ENCODE measurements at regions of chr17 and their contacts with region 1.

Region 1: DNA sequence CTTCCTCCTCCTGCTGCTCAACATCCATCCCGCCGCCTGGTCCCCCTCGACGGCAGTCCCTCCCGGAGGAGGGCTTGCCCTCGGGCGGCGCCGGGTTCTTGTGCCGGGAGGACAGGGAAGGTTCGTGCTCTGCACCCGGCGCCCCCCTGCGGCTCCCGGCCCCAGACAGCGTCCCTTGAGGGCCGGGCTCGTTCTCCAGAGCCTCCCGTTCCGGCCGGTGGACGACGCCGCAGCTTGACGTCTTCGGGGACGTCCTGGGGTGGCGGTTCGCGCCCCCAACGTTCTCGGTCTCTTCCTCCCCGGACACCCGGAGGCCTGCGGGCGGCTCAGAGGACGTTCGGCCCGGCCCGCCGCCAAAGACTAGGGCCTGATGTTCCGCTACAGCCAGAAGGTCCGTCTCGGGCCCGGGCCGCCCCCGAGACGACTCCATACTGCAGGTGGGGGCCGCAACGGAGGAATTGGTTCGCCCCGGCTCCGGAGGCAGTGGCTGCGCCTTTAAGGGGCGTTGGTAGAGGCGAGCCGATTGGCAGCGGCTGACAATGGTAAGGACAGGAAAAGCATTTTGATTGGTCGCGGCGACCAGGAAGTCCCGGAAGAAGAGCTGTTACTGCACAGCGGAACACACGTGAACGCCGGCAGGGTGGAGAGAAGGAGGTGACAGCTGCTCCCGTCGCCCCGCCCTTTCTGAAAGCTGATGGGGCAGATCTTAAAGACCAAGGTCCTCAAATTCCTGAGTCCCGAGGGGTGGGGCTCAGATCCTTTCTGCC is at the start of gene BORCS6:
- DNase-seq: peak; percentile 97 to 99 (median 98)
- ATAC-seq: peak; percentile 68 to 83 (median 78)
- H3K4me3 ChIP-seq: peak within 1 kb of the TSS; percentile 57 to 96 (median 82)
- H3K27ac ChIP-seq: peak within 1 kb of the TSS; percentile 87 to 99 (median 96)
- H3K4me1 ChIP-seq: peaks cover 6 to 54% (median 35%) of the 10 kb centered on the region in 12 donors
- H3K27me3 ChIP-seq: no peaks in the 10 kb centered on the region
- CTCF ChIP-seq: peak in 5 of 12 donors; percentile 10 to 23 (median 12)
- POLR2A ChIP-seq: peak in 1 of 2 donors; percentile 88
- total RNA-seq, gene BORCS6: 6.1 to 13.5 (median 8.1) TPM

Region 2: GRCh38 chr17:8138672-8139371 is 51.1 kb before region 1 on chr17:
- intact Hi-C with region 1: loop called in 2 of 10 experiments (anchors 1 to 10 kb)
- DNase-seq: peak; percentile 94 to 97 (median 94)
- ATAC-seq: peak; percentile 90 to 93 (median 91)
- H3K4me3 ChIP-seq: peak overlapping the region in 8 of 12 donors; percentile 2 to 48 (median 33)
- H3K27ac ChIP-seq: peak overlapping the region; percentile 31 to 89 (median 81)
- H3K4me1 ChIP-seq: peaks cover 0 to 45% (median 15%) of the 10 kb centered on the region in 12 donors
- H3K27me3 ChIP-seq: no peaks in the 10 kb centered on the region
- CTCF ChIP-seq: peak; percentile 82 to 95 (median 90)
- POLR2A ChIP-seq: peak in 1 of 2 donors; percentile 75

Region 3: DNA sequence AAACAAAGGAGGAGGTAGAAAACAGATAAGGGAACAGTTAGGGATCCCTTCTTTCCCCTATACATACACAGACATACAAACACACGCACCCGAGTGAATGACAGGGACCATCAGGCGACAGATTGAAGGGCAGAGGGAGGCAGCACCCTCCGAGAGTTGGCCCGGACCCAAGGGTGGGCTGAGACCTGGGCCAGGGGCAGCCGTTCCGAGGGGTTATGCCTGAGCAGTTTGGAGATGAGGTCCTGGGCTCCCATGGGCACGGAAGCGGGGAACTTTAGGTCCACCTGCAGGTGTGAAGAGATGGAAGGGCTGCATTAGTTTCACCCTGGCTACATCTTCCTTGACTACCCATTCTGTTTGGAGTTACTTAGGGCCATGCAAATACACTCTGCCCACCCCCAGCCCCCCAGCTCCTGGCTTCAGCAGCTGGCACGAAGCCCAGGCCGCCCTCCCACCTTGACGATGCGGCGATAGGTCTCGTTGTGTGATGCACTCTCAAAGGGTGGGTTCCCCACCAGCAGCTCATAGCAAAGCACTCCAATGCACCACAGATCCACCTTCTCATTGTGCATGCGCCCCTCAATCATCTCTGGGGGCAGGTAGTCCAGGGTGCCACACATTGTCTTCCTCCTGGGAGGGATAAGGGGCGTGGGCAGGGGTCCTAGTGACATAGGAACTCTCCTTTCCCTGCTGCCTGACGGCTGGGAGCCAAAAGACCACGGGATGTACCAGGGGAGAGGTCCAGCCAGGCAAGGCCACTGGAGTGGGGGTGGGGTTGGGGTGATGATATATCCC is 15.1 kb after region 1 on chr17:
- intact Hi-C with region 1: loop called in 1 of 10 experiments (anchors 1 kb)
- DNase-seq: no peak
- ATAC-seq: no peak
- H3K4me3 ChIP-seq: no peak overlapping the region
- H3K27ac ChIP-seq: no peak overlapping the region
- H3K4me1 ChIP-seq: peaks cover 0 to 16% (median 2%) of the 10 kb centered on the region in 12 donors
- H3K27me3 ChIP-seq: no peaks in the 10 kb centered on the region
- CTCF ChIP-seq: no peak
- POLR2A ChIP-seq: no peak

Region 4: DNA sequence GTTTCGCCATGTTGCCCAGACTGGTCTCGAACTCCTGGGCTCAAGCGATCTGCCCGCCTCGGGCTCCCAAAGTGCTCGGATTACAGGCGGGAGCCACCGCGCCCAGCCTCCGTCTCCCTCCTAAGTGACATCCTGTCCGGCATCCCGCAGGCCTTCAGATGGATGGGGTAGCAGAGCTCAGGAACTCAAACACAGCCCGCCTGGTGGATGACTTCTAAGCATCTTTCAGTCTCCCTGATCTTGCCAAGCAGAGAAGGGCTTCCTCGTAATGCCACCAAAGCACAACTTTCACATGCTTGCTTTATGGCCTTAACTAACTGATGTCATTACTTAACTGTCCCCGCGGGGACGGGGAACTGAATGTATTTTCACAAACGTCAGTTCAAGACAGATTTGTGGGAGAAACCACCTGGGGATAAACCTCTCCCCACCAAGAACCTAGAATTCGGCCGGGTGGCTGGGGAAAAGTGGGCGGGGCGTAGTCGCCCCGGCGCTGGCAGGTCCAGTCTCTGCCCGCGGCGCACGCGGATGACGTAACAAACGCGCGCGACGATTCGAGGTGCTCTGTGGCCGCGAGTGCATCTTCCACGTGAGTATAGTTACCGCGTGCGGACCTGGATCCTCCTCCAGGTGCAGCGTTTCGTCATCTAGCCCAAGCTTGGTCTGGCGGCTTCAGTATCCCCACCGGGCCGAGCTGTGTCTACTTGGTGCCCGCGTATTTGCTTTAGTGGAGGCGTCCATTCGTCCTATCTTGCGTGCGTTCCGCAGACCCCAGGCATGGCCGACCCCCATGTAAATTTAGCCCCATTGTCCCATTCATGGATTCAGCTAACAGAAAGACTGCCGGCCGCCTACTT is 59.1 kb after region 1 on chr17 and contains the start of gene PFAS:
- intact Hi-C with region 1: loop called in 3 of 10 experiments (anchors 2 to 10 kb)
- DNase-seq: peak; percentile 96 to 97 (median 96)
- ATAC-seq: peak; percentile 70 to 84 (median 80)
- H3K4me3 ChIP-seq: peak within 1 kb of the TSS; percentile 34 to 96 (median 69)
- H3K27ac ChIP-seq: peak within 1 kb of the TSS; percentile 79 to 99 (median 96)
- H3K4me1 ChIP-seq: peaks cover 0 to 26% (median 12%) of the 10 kb centered on the region in 12 donors
- H3K27me3 ChIP-seq: no peaks in the 10 kb centered on the region
- CTCF ChIP-seq: peak in 1 of 12 donors; percentile 6
- POLR2A ChIP-seq: peak in 1 of 2 donors; percentile 29
- total RNA-seq, gene PFAS: 7.7 to 23.8 (median 14.1) TPM

Region 5: DNA sequence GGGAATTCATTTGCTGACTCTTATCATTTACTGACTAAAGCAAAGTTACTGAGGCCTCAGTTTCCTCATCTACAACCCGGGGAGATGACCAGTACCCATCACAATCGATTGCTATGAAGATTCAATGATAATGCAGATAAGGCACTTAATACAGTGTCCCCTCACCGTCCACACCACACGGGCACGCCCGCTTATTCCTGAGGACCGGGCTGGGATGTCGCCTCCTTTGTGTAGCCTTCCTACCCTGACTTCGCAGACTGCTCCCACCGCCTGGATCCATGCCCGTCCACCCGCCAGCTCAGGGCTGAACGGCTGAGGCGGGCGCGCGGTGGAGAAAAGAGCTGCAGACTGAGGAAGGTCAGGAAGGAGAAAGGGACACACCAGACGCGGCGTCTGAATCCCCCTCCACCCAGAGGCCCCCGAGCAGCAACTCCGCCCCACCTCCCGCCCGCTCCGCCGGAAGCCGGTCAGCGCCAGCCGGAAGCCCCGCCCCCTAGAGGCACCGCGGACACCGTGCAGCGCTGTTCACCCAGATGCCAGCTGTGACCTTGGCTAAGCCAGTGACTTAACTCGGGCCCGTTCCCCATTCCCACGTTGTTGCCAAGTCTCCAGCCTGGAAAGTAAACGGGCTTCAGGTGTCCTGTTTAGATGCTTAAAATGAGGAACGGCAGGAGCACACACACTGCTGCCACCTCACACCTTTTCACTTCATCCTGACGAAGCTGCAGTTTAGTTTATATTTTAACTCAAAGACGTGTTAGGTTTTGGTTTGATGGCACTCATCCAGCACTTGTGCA is 186.6 kb after region 1 on chr17 and contains the start of gene KRABD2:
- intact Hi-C with region 1: loop called in 1 of 10 experiments (anchors 10 kb)
- DNase-seq: peak; percentile 93 to 96 (median 95)
- ATAC-seq: peak; percentile 92 to 98 (median 97)
- H3K4me3 ChIP-seq: peak within 1 kb of the TSS; percentile 40 to 97 (median 81)
- H3K27ac ChIP-seq: peak within 1 kb of the TSS; percentile 69 to 98 (median 93)
- H3K4me1 ChIP-seq: peaks cover 0 to 52% (median 35%) of the 10 kb centered on the region in 12 donors
- H3K27me3 ChIP-seq: no peaks in the 10 kb centered on the region
- CTCF ChIP-seq: peak; percentile 35 to 86 (median 51)
- POLR2A ChIP-seq: peak in 1 of 2 donors; percentile 82